Gastrocnemius medialis (tissue), 4 donors: ENCODE measurements at regions of chr7 and their contacts with region 1.

Region 1: GRCh38 chr7:44885394-44886317 is at the start of gene PURB:
- DNase-seq: peak; percentile 94 to 98
- ATAC-seq: peak; percentile 94 to 95
- H3K4me3 ChIP-seq: peak within 1 kb of the TSS; percentile 73 to 100 (median 88)
- H3K27ac ChIP-seq: peak within 1 kb of the TSS; percentile 91 to 100 (median 96)
- H3K4me1 ChIP-seq: peaks cover 45 to 47% of the 10 kb centered on the region in 2 donors
- H3K27me3 ChIP-seq: no peaks in the 10 kb centered on the region
- CTCF ChIP-seq: peak in 1 of 5 experiments; percentile 19
- POLR2A ChIP-seq: peak; percentile 95 to 96
- total RNA-seq, gene PURB: 13.0 to 18.7 (median 15.9) TPM

Region 2: DNA sequence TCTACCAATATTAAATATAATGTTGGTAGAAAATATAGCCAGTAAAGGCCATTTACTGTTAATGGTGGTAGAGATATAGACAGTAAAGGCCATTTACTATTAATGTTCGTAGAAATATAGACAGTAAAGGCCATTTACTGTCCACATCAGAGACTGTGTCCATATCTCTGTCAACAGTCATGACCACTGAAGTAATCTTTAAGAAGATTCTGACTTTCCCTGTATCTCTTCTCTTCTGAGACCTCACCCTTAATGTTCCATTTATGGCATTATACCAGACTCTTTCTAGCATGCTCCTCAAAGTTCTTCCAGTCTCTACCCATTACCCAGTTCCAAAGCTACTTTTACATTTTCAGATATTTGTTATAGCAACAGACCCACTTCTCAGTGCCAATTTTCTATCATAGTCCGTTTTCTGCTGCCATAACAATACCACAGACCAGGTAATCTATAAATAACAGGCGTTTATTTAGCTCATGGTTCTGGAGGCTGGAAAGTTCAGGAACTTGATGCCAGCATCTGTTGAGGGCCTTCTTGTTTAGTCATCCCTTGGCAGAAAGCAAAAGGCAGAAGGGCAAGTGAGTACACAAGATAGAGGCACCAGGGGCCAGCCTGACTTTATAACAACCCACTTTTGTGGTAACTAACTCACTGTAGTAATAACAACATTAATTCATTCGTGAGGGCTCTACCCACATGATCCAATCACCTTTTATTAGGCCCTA is 387.3 kb before region 1 on chr7:
- in situ Hi-C with region 1: no loop called
- intact Hi-C with region 1: loop called (anchors 5 kb)
- DNase-seq: peak; percentile 60 to 77
- ATAC-seq: peak; percentile 100
- H3K4me3 ChIP-seq: no peak overlapping the region
- H3K27ac ChIP-seq: peak overlapping the region; percentile 80 to 87 (median 81)
- H3K4me1 ChIP-seq: peaks cover 15 to 18% of the 10 kb centered on the region in 2 donors
- H3K27me3 ChIP-seq: no peaks in the 10 kb centered on the region
- CTCF ChIP-seq: no peak
- POLR2A ChIP-seq: no peak

Region 3: GRCh38 chr7:44797329-44798251 is 88.1 kb before region 1 on chr7:
- in situ Hi-C with region 1: no loop called
- intact Hi-C with region 1: loop called (anchors 1 kb)
- DNase-seq: peak; percentile 81 to 86
- ATAC-seq: peak; percentile 75 to 76
- H3K4me3 ChIP-seq: peak overlapping the region; percentile 72 to 79 (median 75)
- H3K27ac ChIP-seq: peak overlapping the region; percentile 89 to 97 (median 96)
- H3K4me1 ChIP-seq: peaks cover 16 to 23% of the 10 kb centered on the region in 2 donors
- H3K27me3 ChIP-seq: no peaks in the 10 kb centered on the region
- CTCF ChIP-seq: peak in 2 of 5 experiments; percentile 29 to 52
- POLR2A ChIP-seq: peak in 1 of 2 donors; percentile 27

Region 4: GRCh38 chr7:44867073-44867995 is 18.3 kb before region 1 on chr7:
- in situ Hi-C with region 1: no loop called
- intact Hi-C with region 1: loop called (anchors 2 kb)
- DNase-seq: peak; percentile 71 to 80
- ATAC-seq: peak; percentile 100
- H3K4me3 ChIP-seq: no peak overlapping the region
- H3K27ac ChIP-seq: peak overlapping the region; percentile 78 to 87 (median 82)
- H3K4me1 ChIP-seq: peaks cover 14 to 17% of the 10 kb centered on the region in 2 donors
- H3K27me3 ChIP-seq: no peaks in the 10 kb centered on the region
- CTCF ChIP-seq: no peak
- POLR2A ChIP-seq: no peak

Region 5: GRCh38 chr7:44999245-45000095 is 113.8 kb after region 1 on chr7:
- in situ Hi-C with region 1: no loop called
- intact Hi-C with region 1: loop called (anchors 1 kb)
- DNase-seq: peak; percentile 99
- ATAC-seq: peak; percentile 93 to 95
- H3K4me3 ChIP-seq: peak overlapping the region; percentile 58 to 71 (median 62)
- H3K27ac ChIP-seq: peak overlapping the region; percentile 85 to 94 (median 92)
- H3K4me1 ChIP-seq: peaks cover 13 to 21% of the 10 kb centered on the region in 2 donors
- H3K27me3 ChIP-seq: no peaks in the 10 kb centered on the region
- CTCF ChIP-seq: peak in 1 of 5 experiments; percentile 22
- POLR2A ChIP-seq: peak; percentile 55 to 63